ENCODE measurements at regions of chr5 and their contacts with region 1.

Region 1: DNA sequence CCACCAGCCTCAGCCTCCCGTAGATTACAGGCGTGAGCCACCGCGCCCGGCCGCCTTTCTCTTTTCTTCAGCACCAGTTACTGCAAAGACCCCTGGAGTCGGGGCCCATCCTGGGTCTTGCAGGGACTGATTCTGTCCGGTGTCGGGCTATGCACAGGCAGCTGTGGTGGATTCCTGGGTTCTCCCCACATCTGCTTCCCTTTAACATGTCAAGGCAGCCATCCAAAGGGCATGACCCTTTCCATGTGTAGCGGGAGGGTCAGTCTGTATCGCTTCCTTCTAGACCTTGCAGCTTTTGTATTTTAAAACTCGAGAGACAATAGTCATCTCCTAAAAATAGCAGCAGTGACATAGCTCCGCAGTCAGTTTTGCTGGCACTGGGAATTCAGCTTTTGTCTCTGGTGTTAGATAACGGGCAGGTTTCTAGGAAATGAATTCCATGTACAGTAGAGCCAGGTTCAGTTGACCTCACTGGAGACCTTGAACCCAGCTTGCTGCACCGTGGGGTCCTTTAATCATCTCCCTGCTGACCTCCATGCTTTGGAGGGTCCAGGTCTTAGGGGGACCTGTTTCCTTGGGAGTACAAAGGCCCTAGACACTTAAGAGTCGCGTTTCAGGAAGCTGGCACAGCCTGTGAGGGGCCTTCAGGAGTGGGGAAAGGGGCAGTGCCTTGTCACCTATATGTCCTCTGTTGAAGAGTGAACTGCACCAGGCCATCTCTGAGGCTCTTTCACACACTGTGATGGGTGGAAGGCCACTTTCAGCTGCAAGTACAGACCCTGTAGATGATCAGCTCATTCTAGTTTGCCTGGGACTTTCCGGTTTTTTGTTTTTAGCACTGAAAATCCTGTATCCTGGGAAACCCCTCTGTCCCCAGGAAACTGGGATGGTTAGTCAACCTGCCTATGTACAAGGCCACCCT is 13.8 kb downstream of the ANKRD33B start:
- DNase-seq: no peak
- H3K4me3 Mint-ChIP-seq: no peak overlapping the region
- H3K27ac Mint-ChIP-seq: no peak overlapping the region
- H3K4me1 Mint-ChIP-seq: peaks cover 48% of the 10 kb centered on the region
- H3K27me3 Mint-ChIP-seq: peaks cover 4% of the 10 kb centered on the region

Region 2: GRCh38 chr5:10353241-10354047 is 224.2 kb before region 1 on chr5 and contains the start of gene MARCHF6:
- CTCF ChIA-PET with region 1: no interaction called
- intact Hi-C with region 1: loop called (anchors 1 kb)
- DNase-seq: peak; percentile 96
- H3K4me3 Mint-ChIP-seq: peak within 1 kb of the TSS; percentile 99
- H3K27ac Mint-ChIP-seq: peak within 1 kb of the TSS; percentile 98
- H3K4me1 Mint-ChIP-seq: peaks cover 39% of the 10 kb centered on the region
- H3K27me3 Mint-ChIP-seq: no peaks in the 10 kb centered on the region
- total RNA-seq, gene MARCHF6: 72.5 to 76.8 TPM

Region 3: DNA sequence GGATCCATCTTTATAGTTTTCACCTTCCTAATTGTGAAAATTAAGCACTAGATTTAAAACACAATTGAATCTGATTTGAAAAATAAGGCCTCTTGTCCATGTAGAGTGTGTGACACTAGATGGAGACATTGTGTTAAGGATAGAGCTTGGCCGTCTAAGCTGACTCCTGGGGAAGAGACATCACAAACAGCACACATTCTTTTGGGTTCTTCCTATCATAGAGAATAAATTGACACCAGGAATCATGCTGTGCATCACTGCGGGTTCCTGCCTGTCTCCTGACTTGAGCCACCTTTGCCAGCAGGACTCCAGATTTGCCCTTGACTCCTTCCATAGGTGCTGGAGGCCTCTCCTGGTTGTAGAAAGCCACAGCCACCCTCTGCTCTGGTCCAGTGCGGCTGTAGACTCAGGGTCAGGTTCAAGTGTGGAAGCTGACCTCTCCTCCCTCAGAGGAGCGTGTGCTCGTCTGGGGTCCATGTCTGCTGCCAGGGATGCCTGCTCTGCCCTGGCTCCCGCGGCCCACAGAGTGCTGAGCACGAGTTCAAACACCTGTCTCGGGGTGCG is 124.8 kb before region 1 on chr5:
- CTCF ChIA-PET with region 1: no interaction called
- intact Hi-C with region 1: loop called (anchors 1 kb)
- DNase-seq: peak; percentile 22
- H3K4me3 Mint-ChIP-seq: no peak overlapping the region
- H3K27ac Mint-ChIP-seq: no peak overlapping the region
- H3K4me1 Mint-ChIP-seq: peaks cover 1% of the 10 kb centered on the region
- H3K27me3 Mint-ChIP-seq: no peaks in the 10 kb centered on the region

Region 4: DNA sequence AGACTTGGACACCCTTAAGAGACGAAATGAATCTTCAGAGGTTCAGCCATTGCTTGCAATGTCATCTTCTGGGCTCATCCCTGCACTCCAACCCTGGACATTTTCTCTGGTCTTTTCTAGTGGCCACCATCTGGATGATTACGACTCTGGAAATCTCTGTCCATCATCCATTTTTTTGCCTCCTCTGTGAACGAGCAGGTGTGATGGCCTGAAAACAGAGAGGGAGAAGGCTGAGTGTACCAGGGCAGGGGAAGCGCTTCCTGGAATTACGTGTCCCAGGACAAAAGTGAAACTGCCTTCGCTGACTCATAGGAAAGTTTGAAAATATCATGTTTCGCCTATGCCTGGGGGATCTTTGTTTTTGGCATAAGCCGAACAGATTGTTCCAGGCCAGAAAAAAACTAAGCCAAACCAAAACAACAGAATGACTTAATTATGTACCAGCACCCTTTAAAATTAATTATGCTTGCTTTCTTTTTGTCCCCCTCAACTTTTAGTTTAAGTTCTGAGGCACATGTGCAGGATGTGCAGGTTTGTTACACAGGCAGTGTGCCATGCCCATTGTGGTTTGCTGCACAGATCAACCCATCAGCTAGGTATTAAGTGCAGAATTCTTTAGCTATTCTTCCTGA is 18.2 kb after region 1 on chr5:
- CTCF ChIA-PET with region 1: interaction called, 3 read pairs
- intact Hi-C with region 1: loop called (anchors 1 kb)
- DNase-seq: peak; percentile 68
- H3K4me3 Mint-ChIP-seq: no peak overlapping the region
- H3K27ac Mint-ChIP-seq: no peak overlapping the region
- H3K4me1 Mint-ChIP-seq: peaks cover 35% of the 10 kb centered on the region
- H3K27me3 Mint-ChIP-seq: peaks cover 27% of the 10 kb centered on the region

Region 5: DNA sequence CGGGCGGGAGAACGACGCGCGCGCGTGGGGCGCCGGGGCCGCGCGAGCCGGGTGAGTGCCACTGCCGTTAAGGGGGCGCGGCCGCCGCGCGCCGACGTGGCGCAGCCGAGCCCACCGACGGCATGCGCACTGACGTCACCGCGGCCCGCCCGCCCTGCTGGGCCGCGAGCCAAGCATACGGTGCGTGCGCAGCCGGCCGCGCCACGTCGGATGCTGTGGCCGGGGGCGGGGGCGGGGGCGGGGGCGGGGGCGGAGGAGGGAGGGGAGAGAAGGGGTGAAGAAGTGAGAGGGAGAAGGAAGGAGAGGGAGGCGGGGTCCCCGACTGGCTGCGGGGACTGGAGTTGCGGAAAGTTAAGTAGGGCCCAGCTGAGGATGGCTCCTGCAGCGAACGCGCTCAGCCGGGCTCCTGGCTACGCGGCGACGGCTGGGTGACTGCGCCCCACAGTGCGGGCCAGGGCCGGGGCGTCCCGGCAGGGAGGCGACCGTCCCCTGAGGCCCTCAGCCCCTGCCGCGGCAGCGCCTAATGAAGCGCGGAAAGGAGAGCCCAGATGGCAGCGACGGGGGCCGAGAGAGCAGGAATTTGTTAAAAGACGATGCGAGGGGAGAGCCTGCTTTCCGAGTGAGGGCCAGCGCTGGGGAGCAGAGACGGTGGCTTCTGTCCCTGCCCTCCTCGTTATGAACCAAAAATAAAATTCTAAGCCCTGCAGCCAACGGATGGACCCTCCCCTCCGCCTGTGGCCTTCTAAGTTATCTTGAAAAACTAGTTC is 183.7 kb after region 1 on chr5 and contains the start of gene DAP:
- CTCF ChIA-PET with region 1: no interaction called
- intact Hi-C with region 1: loop called (anchors 2 kb)
- DNase-seq: peak; percentile 78
- H3K4me3 Mint-ChIP-seq: peak within 1 kb of the TSS; percentile 84
- H3K27ac Mint-ChIP-seq: peak within 1 kb of the TSS; percentile 83
- H3K4me1 Mint-ChIP-seq: peaks cover 41% of the 10 kb centered on the region
- H3K27me3 Mint-ChIP-seq: peaks cover 3% of the 10 kb centered on the region
- total RNA-seq, gene DAP: 29.5 to 29.7 TPM